Naive thymus-derived CD4-positive, alpha-beta T cell (primary cell): ENCODE measurements at regions of chr1 and their contacts with region 1.

Region 1: GRCh38 chr1:6099787-6100765 is 54.4 kb downstream of the KCNAB2 start:
- DNase-seq: peak in 1 of 9 donors; percentile 16
- ATAC-seq: peak; percentile 28
- H3K4me3 ChIP-seq: no peak overlapping the region
- H3K4me3 Mint-ChIP-seq: no peak overlapping the region
- H3K27ac ChIP-seq: no peak overlapping the region
- H3K27ac Mint-ChIP-seq: peak overlapping the region in 1 of 9 donors; percentile 54
- H3K4me1 ChIP-seq: no peaks in the 10 kb centered on the region
- H3K4me1 Mint-ChIP-seq: peaks cover 0 to 11% (median 3%) of the 10 kb centered on the region in 7 donors
- H3K27me3 ChIP-seq: no peaks in the 10 kb centered on the region
- H3K27me3 Mint-ChIP-seq: peaks cover 0 to 4% (median 0%) of the 10 kb centered on the region in 5 donors

Region 2: DNA sequence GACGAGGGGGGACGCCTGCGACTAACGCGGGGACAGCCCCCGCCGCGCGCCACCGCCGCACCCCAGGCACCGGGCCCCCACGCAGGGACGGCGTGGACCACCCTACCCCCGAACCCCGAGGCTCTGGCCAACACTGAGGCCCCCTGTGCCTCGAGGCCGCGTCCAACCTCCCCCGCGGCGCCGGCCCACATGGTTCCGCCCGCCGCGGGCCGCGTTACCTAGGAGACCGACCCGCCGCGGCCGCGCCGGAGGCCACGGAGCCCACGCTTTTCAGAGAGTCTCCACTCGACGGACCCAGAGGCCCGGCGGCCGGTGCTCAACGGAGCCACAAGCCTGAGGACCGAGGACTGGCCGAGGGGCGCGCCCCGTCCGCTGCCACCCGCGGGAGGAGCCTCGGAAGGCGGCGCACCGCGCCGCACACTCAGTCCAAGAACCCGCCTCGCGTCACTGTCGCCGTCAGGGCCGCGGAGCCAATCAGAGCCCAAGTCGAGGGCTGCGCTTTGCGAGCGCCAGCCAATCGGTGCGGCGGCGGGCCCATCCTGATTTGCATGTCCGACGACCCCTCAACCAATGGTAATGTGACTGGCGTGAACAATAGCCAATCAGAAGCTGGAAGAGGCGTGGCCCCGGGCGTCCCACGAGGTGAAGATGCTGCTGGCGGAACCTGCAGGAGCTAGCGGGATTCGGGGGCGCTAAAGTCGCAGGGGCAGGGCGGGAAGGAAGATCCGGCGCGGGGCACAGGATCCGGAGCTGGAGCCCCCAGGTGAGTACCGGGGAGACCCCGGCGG is 107.9 kb before region 1 on chr1 and contains the start of gene NPHP4:
- CTCF ChIA-PET with region 1: no interaction called
- POLR2A ChIA-PET with region 1: no interaction called
- intact Hi-C with region 1: loop called in 1 of 2 experiments (anchors 2 kb)
- DNase-seq: peak; percentile 95 to 99 (median 99)
- ATAC-seq: peak; percentile 93
- H3K4me3 ChIP-seq: peak within 1 kb of the TSS; percentile 88
- H3K4me3 Mint-ChIP-seq: peak within 1 kb of the TSS; percentile 88 to 100 (median 96)
- H3K27ac ChIP-seq: peak within 1 kb of the TSS; percentile 94
- H3K27ac Mint-ChIP-seq: peak within 1 kb of the TSS; percentile 88 to 97 (median 96)
- H3K4me1 ChIP-seq: peaks cover 23 to 32% of the 10 kb centered on the region in 2 donors
- H3K4me1 Mint-ChIP-seq: peaks cover 23 to 49% (median 40%) of the 10 kb centered on the region in 7 donors
- H3K27me3 ChIP-seq: no peaks in the 10 kb centered on the region
- H3K27me3 Mint-ChIP-seq: peaks cover 0 to 2% (median 0%) of the 10 kb centered on the region in 5 donors
- total RNA-seq, gene NPHP4: 9.0 to 20.6 (median 11.1) TPM